Activated CD8-positive, alpha-beta T cell treated with anti-CD3 and anti-CD28 coated beads for 36 hours (primary cell): ENCODE measurements at regions of chr4 and their contacts with region 1.

Region 1: DNA sequence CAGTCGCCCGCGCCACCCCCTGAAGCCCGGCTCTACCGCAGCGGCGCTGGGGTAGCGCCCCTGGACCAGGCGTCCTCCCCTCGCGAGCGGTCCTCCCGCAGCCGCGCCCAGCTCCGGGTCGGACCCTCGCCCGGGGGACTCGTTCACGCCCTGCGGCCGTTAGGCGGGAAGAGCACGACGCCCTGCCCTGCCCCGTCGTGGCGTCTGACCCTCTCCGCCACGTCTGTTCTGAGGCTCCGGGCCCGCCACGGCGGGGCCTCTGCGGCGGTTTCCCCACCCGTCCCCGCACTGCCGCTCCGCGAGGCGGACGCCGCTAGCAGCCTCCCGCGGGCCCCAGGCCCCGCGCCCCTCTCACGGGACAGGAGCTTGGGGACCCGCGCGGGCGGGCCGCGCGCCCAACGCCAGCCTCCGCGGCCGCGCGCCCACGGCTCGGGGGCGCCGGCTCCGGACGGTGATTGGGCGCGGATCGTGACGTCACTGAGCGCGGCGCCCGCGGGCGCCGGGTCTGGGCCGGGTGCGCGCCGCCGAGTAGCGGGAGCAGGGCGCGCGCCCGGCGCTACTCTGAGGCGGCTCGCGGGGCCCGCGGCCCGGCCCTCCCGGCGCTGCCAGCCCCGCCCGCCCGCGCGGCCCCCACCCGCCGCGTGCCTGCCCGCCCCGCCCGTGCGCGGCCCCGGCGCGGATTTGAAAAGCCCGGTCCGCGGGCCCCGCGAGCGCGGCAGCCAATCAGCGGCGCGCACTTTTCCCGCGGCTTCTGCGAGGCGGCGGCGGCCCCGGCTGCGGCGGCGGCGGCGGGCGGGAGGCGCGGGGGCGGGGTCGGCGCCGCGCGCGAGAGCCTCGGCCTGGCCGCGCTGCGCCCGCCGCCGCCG is at the start of gene NSD2:
- DNase-seq: peak; percentile 90
- ATAC-seq: peak; percentile 71
- H3K4me3 Mint-ChIP-seq: peak within 1 kb of the TSS; percentile 99
- H3K27ac Mint-ChIP-seq: peak within 1 kb of the TSS; percentile 99
- H3K4me1 Mint-ChIP-seq: peaks cover 35% of the 10 kb centered on the region
- H3K27me3 Mint-ChIP-seq: no peaks in the 10 kb centered on the region
- CTCF ChIP-seq: no peak
- total RNA-seq, gene NSD2: 219 TPM

Region 2: GRCh38 chr4:1856042-1856788 is 14.6 kb before region 1 on chr4 and contains the start of gene LETM1:
- CTCF ChIA-PET with region 1: interaction called, 5 read pairs
- POLR2A ChIA-PET with region 1: interaction called, 49 read pairs
- intact Hi-C with region 1: no loop called
- DNase-seq: peak; percentile 95
- ATAC-seq: peak; percentile 97
- H3K4me3 Mint-ChIP-seq: peak within 1 kb of the TSS; percentile 82
- H3K27ac Mint-ChIP-seq: peak within 1 kb of the TSS; percentile 75
- H3K4me1 Mint-ChIP-seq: peaks cover 39% of the 10 kb centered on the region
- H3K27me3 Mint-ChIP-seq: no peaks in the 10 kb centered on the region
- CTCF ChIP-seq: no peak
- total RNA-seq, gene LETM1: 49.4 to 53.2 TPM

Region 3: GRCh38 chr4:1939664-1940509 is 69.1 kb after region 1 on chr4:
- CTCF ChIA-PET with region 1: no interaction called
- POLR2A ChIA-PET with region 1: no interaction called
- intact Hi-C with region 1: no loop called
- DNase-seq: no peak
- ATAC-seq: no peak
- H3K4me3 Mint-ChIP-seq: no peak overlapping the region
- H3K27ac Mint-ChIP-seq: no peak overlapping the region
- H3K4me1 Mint-ChIP-seq: no peaks in the 10 kb centered on the region
- H3K27me3 Mint-ChIP-seq: no peaks in the 10 kb centered on the region
- CTCF ChIP-seq: no peak

Region 4: DNA sequence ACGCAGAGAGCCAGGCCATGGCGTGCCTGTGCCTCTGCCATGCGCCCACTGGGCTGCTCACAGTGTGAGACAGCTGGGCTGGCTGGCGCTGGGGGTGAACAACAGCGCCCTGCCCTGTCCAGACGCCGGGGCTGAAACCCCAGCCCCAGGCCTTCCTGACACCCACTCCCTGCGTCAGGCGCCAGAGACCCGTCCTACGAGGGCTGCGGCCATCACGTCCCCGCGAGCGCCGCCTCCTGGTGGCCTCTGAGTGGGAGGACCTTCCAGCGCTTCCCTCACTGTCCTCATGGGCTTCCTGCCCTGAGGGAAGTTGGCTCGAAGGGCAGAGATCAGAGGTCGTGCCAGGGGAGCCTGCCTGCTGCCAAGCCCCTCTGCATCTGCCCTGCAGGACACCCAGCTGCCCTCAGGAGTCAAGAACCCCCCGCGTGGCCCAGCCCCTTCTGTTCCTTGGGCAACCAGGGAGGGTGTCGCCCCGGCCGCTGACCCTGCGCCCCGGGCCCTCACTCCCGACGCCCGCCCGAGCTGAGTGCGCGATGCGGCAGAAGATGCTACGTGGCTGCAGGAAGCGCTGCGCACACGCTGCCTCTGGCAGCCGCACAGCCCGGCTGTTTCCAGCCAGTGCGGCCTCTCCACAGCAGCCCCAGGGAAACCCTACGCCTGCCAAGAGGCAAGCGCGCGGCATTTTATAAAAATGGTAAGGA is 121.8 kb after region 1 on chr4:
- CTCF ChIA-PET with region 1: no interaction called
- POLR2A ChIA-PET with region 1: no interaction called
- intact Hi-C with region 1: no loop called
- DNase-seq: no peak
- ATAC-seq: no peak
- H3K4me3 Mint-ChIP-seq: no peak overlapping the region
- H3K27ac Mint-ChIP-seq: no peak overlapping the region
- H3K4me1 Mint-ChIP-seq: peaks cover 5% of the 10 kb centered on the region
- H3K27me3 Mint-ChIP-seq: no peaks in the 10 kb centered on the region
- CTCF ChIP-seq: no peak